Activated CD4-positive, alpha-beta T cell treated with anti-CD3 and anti-CD28 coated beads for 36 hours (primary cell): ENCODE measurements at regions of chr22 and their contacts with region 1.

Region 1: DNA sequence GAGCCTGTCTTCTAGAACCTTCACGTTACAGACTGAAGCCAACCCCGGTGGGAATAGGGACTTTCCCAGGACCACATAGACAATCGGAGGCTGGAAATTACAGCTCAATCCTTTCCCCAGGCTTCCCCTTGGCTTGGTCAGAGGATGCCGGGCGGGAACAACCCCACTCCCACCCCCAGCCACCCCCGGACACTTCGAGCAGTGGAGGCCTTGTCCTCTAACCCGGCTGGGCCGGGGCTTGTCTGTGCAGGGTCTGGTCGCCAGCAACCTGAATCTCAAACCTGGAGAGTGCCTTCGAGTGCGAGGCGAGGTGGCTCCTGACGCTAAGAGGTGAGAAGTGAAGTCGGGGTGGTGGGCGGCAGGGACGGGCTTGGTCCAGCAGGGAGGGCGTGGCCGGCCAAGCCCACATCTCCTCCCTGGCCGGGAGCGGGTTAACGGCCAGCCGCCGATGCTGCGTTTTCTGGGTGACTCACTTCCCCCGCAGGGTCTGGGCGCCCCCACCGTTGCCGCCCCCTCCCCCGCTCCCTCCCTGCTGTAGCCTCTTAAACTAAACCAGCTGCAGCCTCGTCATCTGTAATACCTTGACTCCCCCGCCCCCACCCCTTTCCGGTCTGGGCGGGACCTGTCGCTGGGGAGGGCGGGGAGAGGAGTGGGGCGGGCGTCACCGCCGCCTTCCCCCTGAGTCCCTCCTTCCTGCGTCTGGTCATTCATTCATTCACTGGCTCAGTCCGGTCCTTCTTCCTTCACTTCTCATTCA is 1.5 kb downstream of the LGALS1 start:
- DNase-seq: peak; percentile 97
- ATAC-seq: peak; percentile 78
- H3K4me3 Mint-ChIP-seq: peak overlapping the region; percentile 89
- H3K27ac Mint-ChIP-seq: peak overlapping the region; percentile 96
- H3K4me1 Mint-ChIP-seq: peaks cover 57% of the 10 kb centered on the region
- H3K27me3 Mint-ChIP-seq: no peaks in the 10 kb centered on the region

Region 2: GRCh38 chr22:37486224-37486845 is 190.6 kb before region 1 on chr22 and contains the start of gene MFNG:
- CTCF ChIA-PET with region 1: no interaction called
- POLR2A ChIA-PET with region 1: no interaction called
- intact Hi-C with region 1: loop called in 1 of 2 experiments (anchors 5 kb)
- DNase-seq: peak; percentile 89
- ATAC-seq: peak; percentile 70
- H3K4me3 Mint-ChIP-seq: peak within 1 kb of the TSS; percentile 92
- H3K27ac Mint-ChIP-seq: peak within 1 kb of the TSS; percentile 92
- H3K4me1 Mint-ChIP-seq: peaks cover 64% of the 10 kb centered on the region
- H3K27me3 Mint-ChIP-seq: no peaks in the 10 kb centered on the region
- total RNA-seq, gene MFNG: 108 to 125 TPM

Region 3: DNA sequence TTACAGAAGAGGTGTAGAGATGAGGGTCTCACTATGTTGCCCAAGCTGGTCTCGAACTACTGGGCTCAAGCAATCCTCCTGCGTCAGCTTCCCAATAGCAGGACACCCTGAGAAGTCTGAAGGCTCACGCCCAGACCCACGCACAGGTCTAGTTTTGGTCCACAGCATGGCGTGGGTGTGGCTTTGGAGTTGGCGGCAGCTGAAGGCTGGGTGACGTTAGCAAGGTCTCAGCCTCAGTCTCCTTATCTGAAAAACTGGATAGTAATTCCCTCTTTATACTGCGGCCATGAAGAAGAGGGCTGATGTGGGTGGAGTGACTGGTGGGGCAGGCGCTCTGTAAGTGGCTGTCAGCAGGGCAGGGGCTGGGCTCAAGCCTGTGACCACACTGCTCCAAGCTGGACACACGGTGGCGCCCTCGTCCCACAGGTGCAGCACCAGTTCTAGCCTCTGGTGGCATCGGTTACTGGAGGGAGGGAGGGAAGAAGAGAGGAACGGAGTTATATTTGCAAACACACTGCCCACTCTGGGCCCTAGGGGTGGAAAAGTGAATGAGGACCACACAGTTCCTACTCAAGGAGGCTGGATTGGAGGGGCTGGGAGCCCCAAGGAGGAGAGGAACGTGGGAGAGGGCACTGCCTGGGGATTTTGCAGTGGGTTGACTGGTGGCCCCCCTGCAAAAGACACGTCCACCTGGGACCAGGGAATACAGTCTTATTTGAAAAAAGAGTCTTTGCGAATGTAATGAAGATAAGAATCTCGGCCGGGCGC is 138.1 kb before region 1 on chr22:
- CTCF ChIA-PET with region 1: no interaction called
- POLR2A ChIA-PET with region 1: no interaction called
- intact Hi-C with region 1: loop called in 1 of 2 experiments (anchors 5 kb)
- DNase-seq: peak; percentile 97
- ATAC-seq: peak; percentile 92
- H3K4me3 Mint-ChIP-seq: no peak overlapping the region
- H3K27ac Mint-ChIP-seq: peak overlapping the region; percentile 55
- H3K4me1 Mint-ChIP-seq: peaks cover 39% of the 10 kb centered on the region
- H3K27me3 Mint-ChIP-seq: peaks cover 12% of the 10 kb centered on the region

Region 4: DNA sequence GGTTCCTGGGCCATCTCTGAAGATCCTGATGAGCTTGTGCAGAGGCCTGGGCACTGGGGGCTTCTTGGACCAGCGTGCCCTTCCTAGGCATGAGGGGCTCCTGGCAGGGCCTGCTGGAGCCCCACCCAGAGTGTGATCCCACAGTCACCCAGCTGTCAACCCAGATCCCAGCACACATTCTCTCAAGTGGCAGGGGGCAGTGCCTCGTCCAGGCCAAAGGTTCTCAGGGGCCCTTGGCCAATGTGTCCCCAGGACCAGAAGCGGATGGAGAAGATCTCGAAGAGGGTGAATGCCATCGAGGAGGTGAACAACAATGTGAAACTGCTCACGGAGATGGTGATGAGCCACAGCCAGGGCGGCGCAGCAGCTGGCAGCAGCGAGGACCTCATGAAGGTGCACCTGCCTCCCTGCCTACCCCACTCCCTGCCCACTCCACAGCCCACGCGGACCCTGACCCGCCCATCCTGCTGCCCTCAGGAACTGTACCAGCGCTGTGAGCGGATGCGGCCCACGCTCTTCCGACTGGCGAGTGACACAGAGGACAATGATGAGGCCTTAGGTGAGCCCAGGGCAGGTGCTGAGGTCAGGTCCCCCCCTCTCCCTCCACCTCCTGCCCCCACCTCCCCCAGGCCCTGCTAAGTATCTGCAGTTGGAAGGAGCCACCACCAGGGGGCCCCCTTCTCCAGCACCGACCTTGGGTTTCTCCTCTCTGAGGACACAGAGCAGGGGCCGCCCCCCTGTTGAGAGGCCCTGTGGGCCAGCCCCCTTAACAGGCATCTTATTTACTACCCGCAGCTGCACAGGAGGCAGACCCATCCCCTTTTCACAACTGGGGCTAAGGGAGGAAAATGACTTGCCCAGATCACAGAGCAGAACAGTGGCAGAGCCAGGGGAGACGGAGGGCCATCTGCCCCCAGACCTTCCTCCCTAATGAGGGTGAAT is 53.6 kb before region 1 on chr22:
- CTCF ChIA-PET with region 1: interaction called, 10 read pairs
- POLR2A ChIA-PET with region 1: interaction called, 4 read pairs
- intact Hi-C with region 1: loop called in 1 of 2 experiments (anchors 1 kb)
- DNase-seq: peak; percentile 88
- ATAC-seq: peak; percentile 83
- H3K4me3 Mint-ChIP-seq: no peak overlapping the region
- H3K27ac Mint-ChIP-seq: peak overlapping the region; percentile 89
- H3K4me1 Mint-ChIP-seq: peaks cover 43% of the 10 kb centered on the region
- H3K27me3 Mint-ChIP-seq: no peaks in the 10 kb centered on the region

Region 5: GRCh38 chr22:37633625-37634416 is 43.1 kb before region 1 on chr22:
- CTCF ChIA-PET with region 1: interaction called, 12 read pairs
- POLR2A ChIA-PET with region 1: interaction called, 3 read pairs
- intact Hi-C with region 1: loop called in 1 of 2 experiments (anchors 1 kb)
- DNase-seq: peak; percentile 86
- ATAC-seq: peak; percentile 70
- H3K4me3 Mint-ChIP-seq: peak overlapping the region; percentile 58
- H3K27ac Mint-ChIP-seq: peak overlapping the region; percentile 93
- H3K4me1 Mint-ChIP-seq: peaks cover 56% of the 10 kb centered on the region
- H3K27me3 Mint-ChIP-seq: no peaks in the 10 kb centered on the region

Region 6: GRCh38 chr22:37643225-37643847 is 33.6 kb before region 1 on chr22:
- CTCF ChIA-PET with region 1: interaction called, 79 read pairs
- POLR2A ChIA-PET with region 1: interaction called, 5 read pairs
- intact Hi-C with region 1: loop called (anchors 1 kb)
- DNase-seq: peak; percentile 93
- ATAC-seq: peak; percentile 79
- H3K4me3 Mint-ChIP-seq: no peak overlapping the region
- H3K27ac Mint-ChIP-seq: peak overlapping the region; percentile 75
- H3K4me1 Mint-ChIP-seq: peaks cover 37% of the 10 kb centered on the region
- H3K27me3 Mint-ChIP-seq: no peaks in the 10 kb centered on the region

Region 7: GRCh38 chr22:37745548-37746365 is 68.8 kb after region 1 on chr22:
- CTCF ChIA-PET with region 1: no interaction called
- POLR2A ChIA-PET with region 1: no interaction called
- intact Hi-C with region 1: loop called in 1 of 2 experiments (anchors 1 kb)
- DNase-seq: peak; percentile 95
- ATAC-seq: peak; percentile 91
- H3K4me3 Mint-ChIP-seq: peak overlapping the region; percentile 84
- H3K27ac Mint-ChIP-seq: peak overlapping the region; percentile 90
- H3K4me1 Mint-ChIP-seq: peaks cover 25% of the 10 kb centered on the region
- H3K27me3 Mint-ChIP-seq: no peaks in the 10 kb centered on the region